Testis (tissue), 5 donors: ENCODE measurements at regions of chr3 and their contacts with region 1.

Region 1: DNA sequence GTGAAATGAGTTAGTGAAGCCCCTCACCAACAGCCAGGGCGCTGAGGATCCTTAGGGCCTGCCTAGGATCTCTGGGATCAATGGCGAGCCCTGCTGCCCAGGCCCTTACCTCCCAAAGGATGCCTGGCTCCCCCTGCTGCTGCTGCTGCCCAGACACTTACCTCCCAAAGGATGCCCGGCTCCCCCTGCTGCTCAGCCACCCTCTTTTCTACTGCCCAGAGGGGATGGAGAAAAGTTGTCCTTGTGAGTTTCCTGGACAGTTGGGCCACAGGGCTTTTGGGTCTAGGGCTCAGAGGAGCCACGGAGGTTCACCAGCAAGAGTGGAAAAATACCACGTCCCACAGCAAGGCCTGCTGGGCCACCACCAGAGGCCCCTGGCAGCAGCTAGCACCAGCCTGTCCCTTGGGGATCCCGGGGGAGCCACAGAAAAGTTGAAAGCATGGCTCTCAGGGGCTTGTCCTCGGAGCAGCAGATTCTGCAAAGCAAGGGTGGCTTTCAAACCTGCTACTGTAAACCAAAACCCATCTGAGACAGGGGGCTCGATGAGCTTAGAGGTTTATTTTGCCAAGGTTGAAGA is 59.4 kb downstream of the SLC6A6 start:
- DNase-seq: peak; percentile 68
- H3K4me3 ChIP-seq: no peak overlapping the region
- H3K27ac ChIP-seq: no peak overlapping the region
- H3K4me1 ChIP-seq: peaks cover 14% of the 10 kb centered on the region
- H3K27me3 ChIP-seq: no peaks in the 10 kb centered on the region
- CTCF ChIP-seq: peak in 2 of 3 experiments; percentile 21 to 27
- POLR2A ChIP-seq: no peak

Region 2: GRCh38 chr3:14203521-14204079 is 258.2 kb before region 1 on chr3:
- intact Hi-C with region 1: loop called (anchors 10 kb)
- DNase-seq: peak; percentile 79
- H3K4me3 ChIP-seq: no peak overlapping the region
- H3K27ac ChIP-seq: no peak overlapping the region
- H3K4me1 ChIP-seq: peaks cover 28% of the 10 kb centered on the region
- H3K27me3 ChIP-seq: no peaks in the 10 kb centered on the region
- CTCF ChIP-seq: peak; percentile 81 to 93 (median 86)
- POLR2A ChIP-seq: no peak

Region 3: DNA sequence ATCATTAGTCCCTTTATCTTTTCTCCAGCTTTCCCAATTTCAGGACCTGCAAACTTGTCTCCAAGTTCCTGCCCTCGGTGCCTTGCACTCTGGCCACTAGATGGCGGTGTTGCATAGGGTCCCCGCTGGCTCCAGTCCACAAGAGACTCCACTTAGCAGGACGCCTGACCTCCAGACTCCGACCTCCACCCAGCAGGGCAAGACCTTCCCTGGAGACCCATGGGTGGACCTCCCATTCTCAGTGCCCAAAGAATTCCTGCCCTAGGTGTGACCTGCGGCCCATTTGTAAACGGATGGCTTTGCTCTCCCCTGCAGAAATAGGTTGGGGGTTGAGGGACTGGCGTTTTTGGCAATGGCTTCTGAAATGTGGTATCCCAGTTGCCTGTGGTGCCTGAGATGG is 200.6 kb before region 1 on chr3:
- intact Hi-C with region 1: loop called (anchors 5 kb)
- DNase-seq: peak; percentile 92
- H3K4me3 ChIP-seq: no peak overlapping the region
- H3K27ac ChIP-seq: no peak overlapping the region
- H3K4me1 ChIP-seq: peaks cover 5% of the 10 kb centered on the region
- H3K27me3 ChIP-seq: no peaks in the 10 kb centered on the region
- CTCF ChIP-seq: peak; percentile 88 to 97 (median 93)
- POLR2A ChIP-seq: no peak